PC-3 (cell line): ENCODE measurements at regions of chr9 and their contacts with region 1.

Region 1: DNA sequence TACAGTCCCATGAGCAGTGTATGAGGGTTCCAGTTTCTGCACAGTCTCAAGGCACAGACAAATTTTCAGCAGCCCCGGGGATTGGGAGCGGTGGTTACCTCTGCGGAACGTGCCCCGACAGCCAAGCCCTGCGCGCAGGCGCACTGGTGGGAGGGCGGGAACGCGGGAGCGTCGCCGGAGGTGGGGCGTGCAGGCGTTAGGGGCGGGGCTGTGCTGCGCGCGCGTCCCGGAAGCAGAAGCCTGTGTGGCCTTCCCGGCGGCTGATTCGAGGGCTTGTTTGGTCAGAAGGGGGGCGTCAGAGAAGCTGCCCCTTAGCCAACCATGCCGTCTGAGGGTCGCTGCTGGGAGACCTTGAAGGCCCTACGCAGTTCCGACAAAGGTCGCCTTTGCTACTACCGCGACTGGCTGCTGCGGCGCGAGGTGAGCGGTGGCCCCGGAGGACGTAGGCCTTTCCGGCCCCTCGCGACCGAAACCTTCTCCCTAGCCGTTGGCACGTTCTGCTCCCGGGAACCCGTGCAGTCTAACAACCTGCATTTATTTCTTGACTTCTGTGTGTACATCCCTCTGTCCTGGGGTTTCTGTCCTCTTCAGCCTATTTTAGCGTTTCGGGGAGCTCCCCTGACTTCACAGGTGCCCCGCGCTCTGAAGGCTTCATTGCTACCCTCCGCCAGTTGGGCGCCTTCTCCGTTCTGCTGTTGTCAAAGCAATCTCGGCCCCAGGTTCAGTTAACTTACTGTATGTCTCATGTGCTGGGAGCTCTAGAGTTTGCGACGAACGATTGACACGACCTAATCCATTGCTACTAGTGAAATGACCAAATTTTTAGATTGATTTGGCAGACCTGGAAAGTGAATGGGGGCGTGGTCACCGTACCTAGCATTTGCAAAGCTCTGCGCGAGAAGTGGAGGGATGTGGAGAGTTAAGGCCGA is at the start of gene GLE1:
- DNase-seq: peak; percentile 90
- ATAC-seq: peak; percentile 89
- H3K4me3 ChIP-seq: peak within 1 kb of the TSS; percentile 88
- H3K27ac ChIP-seq: peak within 1 kb of the TSS; percentile 33
- H3K4me1 ChIP-seq: peaks cover 22% of the 10 kb centered on the region; the same call in 1 of the 2 replicates
- H3K27me3 ChIP-seq: no peaks in the 10 kb centered on the region
- CTCF ChIP-seq: no peak
- total RNA-seq, gene GLE1: 27.0 and 39.0 TPM in 2 replicates

Region 2: GRCh38 chr9:128552153-128552743 is 47.5 kb after region 1 on chr9 and contains the start of gene SPTAN1:
- CTCF ChIA-PET with region 1: no interaction called
- POLR2A ChIA-PET with region 1: no interaction called
- intact Hi-C with region 1: loop called (anchors 10 kb)
- DNase-seq: peak; percentile 85
- ATAC-seq: peak; percentile 67
- H3K4me3 ChIP-seq: peak within 1 kb of the TSS; percentile 90
- H3K27ac ChIP-seq: peak within 1 kb of the TSS; percentile 20
- H3K4me1 ChIP-seq: peaks cover 43% of the 10 kb centered on the region
- H3K27me3 ChIP-seq: no peaks in the 10 kb centered on the region
- CTCF ChIP-seq: no peak
- total RNA-seq, gene SPTAN1: 221 and 251 TPM in 2 replicates

Region 3: DNA sequence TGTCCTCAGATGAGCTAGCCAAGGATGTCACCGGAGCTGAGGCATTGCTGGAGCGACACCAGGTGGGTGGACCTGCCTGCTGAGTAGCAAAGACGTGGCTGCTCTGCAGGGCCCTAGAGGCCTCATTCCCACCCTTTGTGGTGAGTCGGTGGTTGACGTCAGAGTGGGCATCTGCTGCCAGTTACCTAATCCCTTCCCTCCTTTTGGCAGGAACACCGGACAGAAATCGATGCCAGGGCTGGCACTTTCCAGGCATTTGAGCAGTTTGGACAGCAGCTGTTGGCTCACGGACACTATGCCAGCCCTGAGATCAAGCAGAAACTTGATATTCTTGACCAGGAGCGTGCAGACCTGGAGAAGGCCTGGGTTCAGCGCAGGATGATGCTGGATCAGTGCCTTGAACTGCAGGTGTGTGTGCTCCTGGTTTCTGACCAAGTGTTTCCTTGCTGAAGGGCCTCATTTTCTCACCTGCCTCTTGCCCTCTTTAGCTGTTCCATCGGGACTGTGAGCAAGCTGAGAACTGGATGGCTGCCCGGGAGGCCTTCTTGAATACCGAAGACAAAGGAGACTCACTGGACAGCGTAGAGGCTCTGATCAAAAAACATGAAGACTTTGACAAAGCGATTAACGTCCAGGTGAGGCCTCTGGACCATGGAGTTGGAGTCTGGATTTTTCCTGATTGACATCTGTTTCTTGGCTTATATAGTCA is 103.0 kb after region 1 on chr9:
- CTCF ChIA-PET with region 1: no interaction called
- POLR2A ChIA-PET with region 1: no interaction called
- intact Hi-C with region 1: no loop called
- DNase-seq: peak; percentile 43
- ATAC-seq: peak; percentile 95
- H3K4me3 ChIP-seq: no peak overlapping the region
- H3K27ac ChIP-seq: peak overlapping the region; percentile 40
- H3K4me1 ChIP-seq: no peaks in the 10 kb centered on the region
- H3K27me3 ChIP-seq: no peaks in the 10 kb centered on the region
- CTCF ChIP-seq: no peak